CD8-positive, alpha-beta memory T cell (primary cell): ENCODE measurements at regions of chr4 and their contacts with region 1.

Region 1: GRCh38 chr4:6640292-6641163 is at the start of gene MRFAP1:
- DNase-seq: peak; percentile 91 to 97 (median 93)
- H3K4me3 ChIP-seq: peak within 1 kb of the TSS; percentile 98
- H3K4me3 Mint-ChIP-seq: peak within 1 kb of the TSS; percentile 94 to 100 (median 99)
- H3K27ac ChIP-seq: peak within 1 kb of the TSS; percentile 96
- H3K27ac Mint-ChIP-seq: peak within 1 kb of the TSS; percentile 96 to 100 (median 100)
- H3K4me1 ChIP-seq: peaks cover 31% of the 10 kb centered on the region
- H3K4me1 Mint-ChIP-seq: peaks cover 37 to 52% (median 50%) of the 10 kb centered on the region in 3 donors
- H3K27me3 ChIP-seq: no peaks in the 10 kb centered on the region
- H3K27me3 Mint-ChIP-seq: peaks cover 0 to 3% of the 10 kb centered on the region in 2 donors
- total RNA-seq, gene MRFAP1: 122 to 126 TPM

Region 2: GRCh38 chr4:6443035-6444023 is 197.2 kb before region 1 on chr4:
- CTCF ChIA-PET with region 1: no interaction called
- POLR2A ChIA-PET with region 1: no interaction called
- DNase-seq: no peak
- H3K4me3 ChIP-seq: no peak overlapping the region
- H3K4me3 Mint-ChIP-seq: no peak overlapping the region
- H3K27ac ChIP-seq: no peak overlapping the region
- H3K27ac Mint-ChIP-seq: no peak overlapping the region
- H3K4me1 ChIP-seq: no peaks in the 10 kb centered on the region
- H3K4me1 Mint-ChIP-seq: peaks cover 0 to 1% (median 0%) of the 10 kb centered on the region in 3 donors
- H3K27me3 ChIP-seq: no peaks in the 10 kb centered on the region
- H3K27me3 Mint-ChIP-seq: peaks cover 14 to 41% of the 10 kb centered on the region in 2 donors

Region 3: DNA sequence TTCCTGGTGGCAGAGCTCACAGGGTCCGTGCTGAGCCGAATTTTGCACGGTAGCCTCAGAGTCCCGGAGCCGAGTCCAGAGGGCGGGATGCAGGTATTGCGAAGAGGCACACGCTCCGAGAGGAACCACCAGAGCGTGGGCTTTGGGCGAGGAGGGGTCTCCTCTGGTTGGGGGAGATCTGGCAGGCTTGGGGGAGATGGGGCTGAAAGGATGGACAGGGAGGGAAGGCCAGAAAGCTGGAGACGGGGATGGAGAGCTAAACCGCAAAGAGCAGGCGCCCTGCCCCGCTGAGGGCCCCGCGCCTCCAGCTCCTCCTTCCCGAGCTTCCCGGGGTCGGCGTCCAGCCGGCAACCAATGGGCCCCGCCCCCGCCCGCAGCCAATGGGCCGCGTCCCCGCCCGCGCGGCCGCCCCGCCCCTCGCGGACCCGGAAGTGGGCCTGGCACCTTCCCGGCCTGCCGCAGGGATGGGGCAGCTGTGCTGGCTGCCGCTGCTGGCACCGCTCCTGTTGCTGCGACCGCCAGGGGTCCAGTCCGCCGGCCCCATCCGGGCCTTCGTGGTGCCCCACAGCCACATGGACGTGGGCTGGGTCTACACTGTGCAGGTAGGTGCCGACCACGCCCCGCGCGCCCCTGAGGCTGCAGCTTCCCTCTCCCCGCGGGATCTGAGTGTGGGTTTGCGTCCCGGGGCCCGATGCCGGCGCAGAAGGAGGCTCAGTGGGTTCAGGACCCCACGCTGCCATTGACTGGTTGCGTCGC is 65.6 kb before region 1 on chr4 and contains the start of gene MAN2B2:
- CTCF ChIA-PET with region 1: no interaction called
- POLR2A ChIA-PET with region 1: interaction called, 11 read pairs
- DNase-seq: peak; percentile 79 to 86 (median 81)
- H3K4me3 ChIP-seq: peak within 1 kb of the TSS; percentile 83
- H3K4me3 Mint-ChIP-seq: peak within 1 kb of the TSS; percentile 87 to 96 (median 90)
- H3K27ac ChIP-seq: peak within 1 kb of the TSS; percentile 81
- H3K27ac Mint-ChIP-seq: peak within 1 kb of the TSS; percentile 30 to 95 (median 86)
- H3K4me1 ChIP-seq: peaks cover 14% of the 10 kb centered on the region
- H3K4me1 Mint-ChIP-seq: peaks cover 6 to 29% (median 12%) of the 10 kb centered on the region in 3 donors
- H3K27me3 ChIP-seq: no peaks in the 10 kb centered on the region
- H3K27me3 Mint-ChIP-seq: no peaks in the 10 kb centered on the region
- total RNA-seq, gene MAN2B2: 17.5 to 18.3 TPM

Region 4: DNA sequence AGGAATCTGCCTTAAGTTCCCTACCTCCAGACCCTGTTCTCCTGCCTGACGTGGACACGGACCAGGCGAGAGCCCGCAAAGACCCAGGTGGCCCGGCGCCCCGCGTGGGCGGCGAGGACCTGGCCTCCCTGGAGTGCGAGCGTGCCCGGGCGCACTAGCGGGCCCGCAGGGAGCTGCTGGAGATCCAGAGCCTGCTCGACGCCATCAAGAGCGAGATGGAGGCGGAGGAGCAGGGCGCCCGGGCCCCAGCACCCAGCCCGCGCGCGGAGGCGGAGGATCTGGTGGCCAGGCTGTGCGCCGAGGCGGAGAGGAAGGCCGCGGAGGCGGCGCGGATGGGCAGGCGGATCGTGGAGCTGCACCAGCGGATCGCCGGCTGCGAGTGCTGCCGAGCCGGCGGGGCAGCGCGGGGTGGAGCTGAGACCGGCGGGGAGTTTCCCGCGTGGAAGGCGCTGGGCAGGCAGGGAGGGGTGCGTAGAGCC is 18.1 kb after region 1 on chr4:
- CTCF ChIA-PET with region 1: interaction called, 11 read pairs
- POLR2A ChIA-PET with region 1: interaction called, 17 read pairs
- DNase-seq: peak; percentile 30 to 67 (median 52)
- H3K4me3 ChIP-seq: peak overlapping the region; percentile 5
- H3K4me3 Mint-ChIP-seq: peak overlapping the region; percentile 54 to 85 (median 69)
- H3K27ac ChIP-seq: no peak overlapping the region
- H3K27ac Mint-ChIP-seq: peak overlapping the region in 4 of 8 donors; percentile 7 to 77 (median 52)
- H3K4me1 ChIP-seq: peaks cover 7% of the 10 kb centered on the region
- H3K4me1 Mint-ChIP-seq: peaks cover 6 to 15% (median 7%) of the 10 kb centered on the region in 3 donors
- H3K27me3 ChIP-seq: no peaks in the 10 kb centered on the region
- H3K27me3 Mint-ChIP-seq: peaks cover 8 to 16% of the 10 kb centered on the region in 2 donors

Region 5: GRCh38 chr4:6663596-6664393 is 23.3 kb after region 1 on chr4:
- CTCF ChIA-PET with region 1: interaction called, 11 read pairs
- POLR2A ChIA-PET with region 1: interaction called, 17 read pairs
- DNase-seq: no peak
- H3K4me3 ChIP-seq: no peak overlapping the region
- H3K4me3 Mint-ChIP-seq: peak overlapping the region in 4 of 7 donors; percentile 19 to 70 (median 38)
- H3K27ac ChIP-seq: no peak overlapping the region
- H3K27ac Mint-ChIP-seq: peak overlapping the region in 1 of 8 donors; percentile 24
- H3K4me1 ChIP-seq: peaks cover 15% of the 10 kb centered on the region
- H3K4me1 Mint-ChIP-seq: peaks cover 4 to 8% (median 5%) of the 10 kb centered on the region in 3 donors
- H3K27me3 ChIP-seq: no peaks in the 10 kb centered on the region
- H3K27me3 Mint-ChIP-seq: peaks cover 11 to 17% of the 10 kb centered on the region in 2 donors

Region 6: DNA sequence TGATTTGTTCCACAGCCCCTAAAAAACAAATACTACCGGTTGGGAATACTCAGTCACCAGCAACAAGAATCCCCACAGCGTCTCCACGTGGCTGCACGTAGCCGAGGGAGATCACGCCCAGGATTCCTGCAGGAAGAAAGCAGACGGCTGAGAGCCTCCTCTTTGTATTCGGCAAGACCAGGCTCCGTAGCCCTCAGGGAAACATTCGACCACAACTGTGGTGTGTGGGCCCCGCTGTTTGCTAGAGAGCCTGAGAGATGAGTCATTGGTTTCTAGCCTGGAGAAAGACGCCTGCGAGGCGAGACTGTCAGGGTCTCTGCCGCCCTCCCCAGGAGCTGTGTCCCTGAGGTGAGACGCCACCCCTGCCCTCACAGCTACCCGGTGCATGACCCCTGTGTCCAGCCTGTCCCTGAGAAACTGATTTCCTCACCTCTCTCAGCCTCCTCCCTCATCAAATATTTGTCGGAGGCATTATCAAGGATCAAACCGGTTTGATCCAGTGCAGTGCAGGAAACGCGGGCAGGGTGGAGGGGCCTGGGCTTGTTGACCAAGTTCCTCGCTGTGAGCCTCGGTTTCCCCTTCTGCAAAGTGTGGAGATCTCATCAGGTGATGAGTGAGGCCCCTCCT is 48.5 kb after region 1 on chr4:
- CTCF ChIA-PET with region 1: interaction called, 13 read pairs
- POLR2A ChIA-PET with region 1: interaction called, 15 read pairs
- DNase-seq: peak; percentile 62 to 90 (median 71)
- H3K4me3 ChIP-seq: peak overlapping the region; percentile 57
- H3K4me3 Mint-ChIP-seq: peak overlapping the region; percentile 91 to 99 (median 97)
- H3K27ac ChIP-seq: peak overlapping the region; percentile 72
- H3K27ac Mint-ChIP-seq: peak overlapping the region; percentile 93 to 100 (median 99)
- H3K4me1 ChIP-seq: peaks cover 65% of the 10 kb centered on the region
- H3K4me1 Mint-ChIP-seq: peaks cover 69 to 84% (median 82%) of the 10 kb centered on the region in 3 donors
- H3K27me3 ChIP-seq: no peaks in the 10 kb centered on the region
- H3K27me3 Mint-ChIP-seq: no peaks in the 10 kb centered on the region

Region 7: GRCh38 chr4:6709230-6710114 is 68.9 kb after region 1 on chr4 and contains the start of gene MRFAP1L1:
- CTCF ChIA-PET with region 1: interaction called, 13 read pairs
- POLR2A ChIA-PET with region 1: interaction called, 23 read pairs
- DNase-seq: peak; percentile 96 to 98 (median 97)
- H3K4me3 ChIP-seq: peak within 1 kb of the TSS; percentile 88
- H3K4me3 Mint-ChIP-seq: peak within 1 kb of the TSS; percentile 98 to 100 (median 99)
- H3K27ac ChIP-seq: peak within 1 kb of the TSS; percentile 88
- H3K27ac Mint-ChIP-seq: peak within 1 kb of the TSS; percentile 93 to 100 (median 98)
- H3K4me1 ChIP-seq: peaks cover 51% of the 10 kb centered on the region
- H3K4me1 Mint-ChIP-seq: peaks cover 57 to 64% (median 64%) of the 10 kb centered on the region in 3 donors
- H3K27me3 ChIP-seq: no peaks in the 10 kb centered on the region
- H3K27me3 Mint-ChIP-seq: no peaks in the 10 kb centered on the region
- total RNA-seq, gene MRFAP1L1: 54.9 to 55.9 TPM

Region 8: GRCh38 chr4:6716018-6716911 is 75.7 kb after region 1 on chr4 and contains the start of gene BLOC1S4:
- CTCF ChIA-PET with region 1: interaction called, 13 read pairs
- POLR2A ChIA-PET with region 1: interaction called, 29 read pairs
- DNase-seq: peak; percentile 83 to 94 (median 92)
- H3K4me3 ChIP-seq: peak within 1 kb of the TSS; percentile 78
- H3K4me3 Mint-ChIP-seq: peak within 1 kb of the TSS; percentile 93 to 97 (median 96)
- H3K27ac ChIP-seq: peak within 1 kb of the TSS; percentile 80
- H3K27ac Mint-ChIP-seq: peak within 1 kb of the TSS; percentile 92 to 98 (median 96)
- H3K4me1 ChIP-seq: peaks cover 34% of the 10 kb centered on the region
- H3K4me1 Mint-ChIP-seq: peaks cover 29 to 48% (median 48%) of the 10 kb centered on the region in 3 donors
- H3K27me3 ChIP-seq: no peaks in the 10 kb centered on the region
- H3K27me3 Mint-ChIP-seq: no peaks in the 10 kb centered on the region
- total RNA-seq, gene BLOC1S4: 21.5 to 22.9 TPM